Heart right ventricle (tissue), 16 donors: ENCODE measurements at regions of chr6 and their contacts with region 1.

Region 1: DNA sequence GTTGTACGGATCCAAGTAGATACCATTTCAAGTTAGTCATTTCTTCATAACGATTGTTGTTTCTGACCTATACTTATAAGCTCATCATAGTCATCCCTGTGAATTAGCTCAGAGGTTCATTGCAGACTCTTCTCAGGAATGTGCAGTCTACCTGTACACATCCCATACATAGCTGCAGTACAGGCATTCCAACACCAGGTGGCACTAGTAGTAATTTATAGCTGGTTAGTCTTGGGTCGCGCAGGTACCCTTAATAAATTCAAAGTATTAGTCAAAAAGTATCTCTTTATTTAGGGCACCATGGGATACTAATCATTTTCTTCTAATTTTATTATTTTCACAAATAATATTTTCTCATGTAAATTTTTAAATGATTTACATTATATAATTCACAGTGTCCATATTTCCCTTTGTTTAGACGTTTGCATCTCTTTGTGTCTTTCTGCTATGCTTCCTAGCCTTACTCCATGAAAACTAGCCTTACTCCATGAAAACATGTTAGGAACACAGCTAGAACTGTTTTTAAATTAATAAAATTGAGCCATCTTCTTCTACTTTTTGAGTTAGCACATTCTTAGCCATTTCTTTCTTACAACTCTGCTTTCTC is 128.6 kb upstream of the FAM83B start:
- DNase-seq: peak in 1 of 2 donors; percentile 52
- ATAC-seq: peak in 3 of 8 donors; percentile 42 to 56 (median 53)
- H3K4me3 ChIP-seq: no peak overlapping the region
- H3K27ac ChIP-seq: no peak overlapping the region
- H3K4me1 ChIP-seq: no peaks in the 10 kb centered on the region
- H3K27me3 ChIP-seq: no peaks in the 10 kb centered on the region
- CTCF ChIP-seq: peak; percentile 58 to 87 (median 77)

Region 2: GRCh38 chr6:54758350-54758749 is 40.4 kb after region 1 on chr6:
- intact Hi-C with region 1: loop called in 1 of 10 experiments (anchors 2 kb)
- DNase-seq: no peak
- ATAC-seq: no peak
- H3K4me3 ChIP-seq: no peak overlapping the region
- H3K27ac ChIP-seq: no peak overlapping the region
- H3K4me1 ChIP-seq: no peaks in the 10 kb centered on the region
- H3K27me3 ChIP-seq: no peaks in the 10 kb centered on the region
- CTCF ChIP-seq: no peak